ENCODE measurements at regions of chr14 and their contacts with region 1.

Region 1: GRCh38 chr14:75711104-75711795 is 50.2 kb downstream of the TTLL5 start:
- DNase-seq: no peak
- ATAC-seq: peak; percentile 79

Region 2: GRCh38 chr14:75660630-75661494 is 50.4 kb before region 1 on chr14 and contains the starts of genes ERG28 and TTLL5:
- intact Hi-C with region 1: no loop called
- DNase-seq: peak; percentile 96
- ATAC-seq: peak; percentile 98
- total RNA-seq, gene ERG28: 8.8 to 9.0 TPM
- total RNA-seq, gene TTLL5: 18.1 to 21.1 TPM

Region 3: DNA sequence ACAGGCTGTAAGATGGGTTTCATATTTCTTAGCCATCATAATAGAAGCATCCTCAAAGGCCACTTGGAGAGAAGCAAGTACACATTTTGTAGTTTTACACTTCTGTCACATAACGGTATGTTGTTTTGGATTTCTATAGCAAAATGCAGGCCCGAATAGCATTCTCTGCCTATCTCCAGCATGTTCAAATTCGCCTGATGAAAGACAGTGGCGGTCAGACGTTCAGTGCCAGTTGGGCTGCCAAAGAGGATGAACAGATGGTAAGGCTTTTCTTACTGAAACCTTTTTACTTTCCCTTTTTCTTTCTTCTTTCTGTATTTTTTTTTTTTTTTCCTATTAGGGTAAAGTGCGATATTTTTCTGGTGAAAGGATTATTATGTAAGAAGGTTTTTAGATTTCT is 60.3 kb after region 1 on chr14:
- intact Hi-C with region 1: loop called in 1 of 2 experiments (anchors 10 kb)
- DNase-seq: no peak
- ATAC-seq: no peak

Region 4: DNA sequence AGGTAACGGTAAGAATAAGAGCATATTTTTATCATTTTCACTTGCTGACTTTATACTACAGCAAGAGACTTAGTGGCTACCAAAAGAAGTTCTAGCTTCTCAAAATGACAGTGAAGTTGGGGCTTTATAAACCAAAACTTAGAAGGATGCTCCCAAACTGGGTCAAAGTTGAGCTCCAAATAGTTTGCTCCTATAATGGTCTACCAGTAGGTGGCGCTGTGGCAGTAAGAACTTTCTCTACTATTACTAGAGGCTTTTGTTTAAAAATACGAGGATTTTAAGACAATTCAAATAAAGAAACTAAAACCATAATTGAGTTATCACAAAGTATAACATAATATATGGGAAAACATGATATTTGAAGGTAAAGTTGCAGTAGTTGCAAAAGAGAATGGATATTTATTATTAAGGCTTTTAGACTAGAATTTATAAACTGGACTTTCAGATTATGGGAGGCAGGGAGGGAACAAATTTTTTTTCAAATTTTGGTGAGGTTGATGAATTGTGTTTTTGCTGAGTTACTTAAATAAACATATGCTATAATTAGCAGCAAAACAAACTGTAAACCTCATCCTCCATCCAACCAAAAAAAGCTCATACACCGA is 195.5 kb after region 1 on chr14:
- intact Hi-C with region 1: loop called in 1 of 2 experiments (anchors 10 kb)
- DNase-seq: peak; percentile 64
- ATAC-seq: peak; percentile 46 to 69